Sigmoid colon (tissue), 7 donors: ENCODE measurements at regions of chr1 and their contacts with region 1.

Region 1: GRCh38 chr1:25997828-25998761 is at the start of gene PAFAH2:
- DNase-seq: peak; percentile 99
- H3K4me3 ChIP-seq: peak within 1 kb of the TSS; percentile 46 to 75 (median 71)
- H3K27ac ChIP-seq: peak within 1 kb of the TSS; percentile 85 to 89 (median 85)
- H3K4me1 ChIP-seq: peaks cover 0 to 19% (median 17%) of the 10 kb centered on the region in 4 donors
- H3K27me3 ChIP-seq: no peaks in the 10 kb centered on the region
- CTCF ChIP-seq: peak; percentile 91 to 100 (median 100)
- EP300 ChIP-seq: peak in 1 of 4 donors; percentile 35
- POLR2A ChIP-seq: peak in 1 of 2 donors; percentile 16
- total RNA-seq, gene PAFAH2: 6.7 to 12.2 (median 9.8) TPM

Region 2: DNA sequence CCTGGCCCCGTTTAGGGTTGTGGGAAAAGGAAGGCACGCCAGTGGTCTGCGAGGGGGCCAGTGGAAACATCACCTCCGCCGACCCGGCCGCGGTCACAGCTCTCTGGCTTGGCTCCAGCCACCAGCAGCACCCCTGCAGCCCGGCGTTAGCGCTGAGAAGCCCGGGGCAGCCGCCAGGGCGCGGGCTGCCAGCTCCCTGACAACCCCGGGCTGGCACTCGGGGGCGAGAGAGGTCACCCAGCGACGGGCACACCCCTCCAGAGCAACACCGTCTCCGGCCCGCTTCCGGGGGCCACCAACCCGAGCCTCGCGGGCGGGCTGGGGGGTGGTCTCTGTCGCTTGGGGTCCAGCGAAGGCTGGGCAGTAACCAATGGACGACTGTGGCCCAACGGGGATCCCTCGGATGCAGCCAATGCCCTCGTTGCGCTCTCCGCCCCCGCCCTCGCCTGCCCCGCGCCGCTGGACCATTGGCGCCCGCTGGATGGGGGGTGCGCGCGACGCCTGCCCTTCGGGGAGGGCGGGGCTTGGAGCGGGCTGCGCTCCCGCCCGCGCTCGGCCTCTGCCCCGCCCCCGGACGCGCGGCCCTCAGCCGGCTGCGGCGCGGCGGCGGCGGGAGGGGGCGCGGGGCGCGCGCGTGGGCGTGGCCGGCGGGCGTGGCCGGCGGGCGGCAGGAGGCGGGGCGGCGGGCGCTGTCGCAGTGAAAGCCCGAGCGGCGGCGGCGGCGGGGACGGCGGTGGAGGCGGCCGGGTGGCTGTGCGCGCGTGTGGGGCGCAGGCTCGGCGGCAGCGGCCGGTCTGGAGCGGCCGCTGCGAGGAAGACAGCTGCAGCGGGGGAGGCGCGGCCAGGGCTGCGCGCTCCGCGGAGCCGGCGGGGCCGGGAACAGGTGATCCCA is 381.8 kb before region 1 on chr1 and contains the start of gene MAN1C1:
- intact Hi-C with region 1: loop called (anchors 5 kb)
- DNase-seq: peak; percentile 93
- H3K4me3 ChIP-seq: peak within 1 kb of the TSS; percentile 70 to 98 (median 80)
- H3K27ac ChIP-seq: peak within 1 kb of the TSS; percentile 88 to 94 (median 89)
- H3K4me1 ChIP-seq: peaks cover 0 to 52% (median 48%) of the 10 kb centered on the region in 4 donors
- H3K27me3 ChIP-seq: no peaks in the 10 kb centered on the region
- CTCF ChIP-seq: peak; percentile 46 to 65 (median 55)
- EP300 ChIP-seq: no peak
- POLR2A ChIP-seq: no peak
- total RNA-seq, gene MAN1C1: 12.8 to 32.1 (median 22.9) TPM

Region 3: GRCh38 chr1:25819576-25820246 is 178.4 kb before region 1 on chr1 and contains the start of gene MTFR1L:
- intact Hi-C with region 1: loop called (anchors 5 kb)
- DNase-seq: peak; percentile 92
- H3K4me3 ChIP-seq: peak within 1 kb of the TSS; percentile 78 to 97 (median 92)
- H3K27ac ChIP-seq: peak within 1 kb of the TSS; percentile 90 to 96 (median 91)
- H3K4me1 ChIP-seq: peaks cover 2 to 35% (median 29%) of the 10 kb centered on the region in 4 donors
- H3K27me3 ChIP-seq: no peaks in the 10 kb centered on the region
- CTCF ChIP-seq: no peak
- EP300 ChIP-seq: peak in 1 of 4 donors; percentile 18
- POLR2A ChIP-seq: peak; percentile 81 to 95
- total RNA-seq, gene MTFR1L: 106 to 150 (median 121) TPM

Region 4: GRCh38 chr1:25874934-25875855 is 122.9 kb before region 1 on chr1 and contains the start of gene PAQR7:
- intact Hi-C with region 1: loop called (anchors 1 kb)
- DNase-seq: peak; percentile 93
- H3K4me3 ChIP-seq: peak within 1 kb of the TSS; percentile 68 to 83 (median 73)
- H3K27ac ChIP-seq: peak within 1 kb of the TSS; percentile 83 to 86 (median 86)
- H3K4me1 ChIP-seq: peaks cover 0 to 43% (median 29%) of the 10 kb centered on the region in 4 donors
- H3K27me3 ChIP-seq: no peaks in the 10 kb centered on the region
- CTCF ChIP-seq: no peak
- EP300 ChIP-seq: no peak
- POLR2A ChIP-seq: peak; percentile 26 to 53
- total RNA-seq, gene PAQR7: 4.3 to 9.4 (median 6.4) TPM

Region 5: DNA sequence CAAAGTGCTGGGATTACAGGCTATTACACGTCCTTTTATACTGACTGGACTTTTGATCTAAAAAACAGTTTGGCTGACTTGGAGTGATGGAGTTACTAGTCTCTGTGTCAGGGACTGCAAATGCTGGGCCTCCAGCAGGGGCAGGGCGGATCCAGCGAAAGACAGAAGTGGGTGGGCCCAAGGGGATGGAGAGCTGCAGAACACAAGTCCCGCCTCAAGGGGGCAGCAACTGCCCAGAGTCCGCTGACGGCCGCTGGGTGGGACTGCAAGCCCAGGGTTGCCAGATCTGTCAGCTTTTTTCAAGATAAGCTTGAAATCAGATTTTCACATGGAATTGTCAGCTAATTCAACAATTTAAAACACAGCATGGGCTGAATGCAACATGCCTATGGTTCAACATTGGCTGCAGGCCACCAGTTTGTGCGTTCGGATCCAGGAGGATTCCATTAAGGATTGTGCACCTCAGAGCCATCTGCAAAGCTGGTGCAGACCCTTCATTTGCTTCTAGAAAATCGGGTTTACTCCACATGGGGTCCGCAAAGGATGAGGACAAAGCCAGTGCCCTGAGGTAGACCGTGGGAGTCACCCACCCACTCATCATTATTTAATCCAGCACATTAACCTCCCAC is 102.6 kb before region 1 on chr1:
- intact Hi-C with region 1: loop called (anchors 1 kb)
- DNase-seq: peak; percentile 95
- H3K4me3 ChIP-seq: peak overlapping the region in 2 of 4 donors; percentile 13 to 21
- H3K27ac ChIP-seq: peak overlapping the region in 2 of 4 donors; percentile 29 to 46
- H3K4me1 ChIP-seq: peaks cover 0 to 31% (median 27%) of the 10 kb centered on the region in 4 donors
- H3K27me3 ChIP-seq: no peaks in the 10 kb centered on the region
- CTCF ChIP-seq: peak; percentile 97 to 99 (median 99)
- EP300 ChIP-seq: no peak
- POLR2A ChIP-seq: no peak

Region 6: GRCh38 chr1:25904943-25905679 is 93.0 kb before region 1 on chr1:
- intact Hi-C with region 1: loop called (anchors 1 kb)
- DNase-seq: peak; percentile 97
- H3K4me3 ChIP-seq: peak overlapping the region; percentile 61 to 75 (median 68)
- H3K27ac ChIP-seq: peak overlapping the region; percentile 76 to 79 (median 78)
- H3K4me1 ChIP-seq: peaks cover 0 to 29% (median 20%) of the 10 kb centered on the region in 4 donors
- H3K27me3 ChIP-seq: no peaks in the 10 kb centered on the region
- CTCF ChIP-seq: no peak
- EP300 ChIP-seq: no peak
- POLR2A ChIP-seq: no peak

Region 7: DNA sequence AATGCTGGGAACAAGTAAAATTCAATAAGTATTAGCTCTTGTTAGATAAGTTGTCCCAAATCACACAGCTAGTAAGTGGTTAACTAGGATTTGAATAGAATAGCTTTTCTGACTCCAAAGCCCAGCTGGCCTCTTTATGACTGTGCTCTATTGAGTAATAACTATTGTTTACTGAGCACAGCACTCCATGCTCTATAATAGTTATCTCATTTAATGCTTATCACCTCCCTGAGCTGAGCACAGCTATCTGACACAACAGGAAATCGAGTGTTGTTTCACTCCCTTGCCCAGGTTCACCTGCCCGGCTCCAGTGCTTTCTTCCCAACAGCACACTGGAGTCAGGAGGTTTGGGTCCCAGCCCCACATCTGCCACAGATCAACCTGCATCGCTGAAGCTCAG is 53.1 kb before region 1 on chr1:
- intact Hi-C with region 1: no loop called
- DNase-seq: no peak
- H3K4me3 ChIP-seq: no peak overlapping the region
- H3K27ac ChIP-seq: no peak overlapping the region
- H3K4me1 ChIP-seq: no peaks in the 10 kb centered on the region
- H3K27me3 ChIP-seq: no peaks in the 10 kb centered on the region
- CTCF ChIP-seq: no peak
- EP300 ChIP-seq: no peak
- POLR2A ChIP-seq: no peak